A673 (cell line): ENCODE measurements at regions of chr1 and their contacts with region 1.

Region 1: GRCh38 chr1:84753516-84754385 is 63.5 kb upstream of the SSX2IP start:
- DNase-seq: peak; percentile 88
- H3K4me3 ChIP-seq: no peak overlapping the region
- H3K27ac ChIP-seq: no peak overlapping the region
- H3K4me1 ChIP-seq: peaks cover 4% of the 10 kb centered on the region
- H3K27me3 ChIP-seq: no peaks in the 10 kb centered on the region
- CTCF ChIP-seq: peak; percentile 98

Region 2: GRCh38 chr1:83931658-83932253 is 822.0 kb before region 1 on chr1:
- CTCF ChIA-PET with region 1: no interaction called
- POLR2A ChIA-PET with region 1: no interaction called
- intact Hi-C with region 1: loop called (anchors 10 kb)
- DNase-seq: peak; percentile 75
- H3K4me3 ChIP-seq: no peak overlapping the region
- H3K27ac ChIP-seq: no peak overlapping the region
- H3K4me1 ChIP-seq: peaks cover 18% of the 10 kb centered on the region
- H3K27me3 ChIP-seq: no peaks in the 10 kb centered on the region
- CTCF ChIP-seq: peak; percentile 79

Region 3: DNA sequence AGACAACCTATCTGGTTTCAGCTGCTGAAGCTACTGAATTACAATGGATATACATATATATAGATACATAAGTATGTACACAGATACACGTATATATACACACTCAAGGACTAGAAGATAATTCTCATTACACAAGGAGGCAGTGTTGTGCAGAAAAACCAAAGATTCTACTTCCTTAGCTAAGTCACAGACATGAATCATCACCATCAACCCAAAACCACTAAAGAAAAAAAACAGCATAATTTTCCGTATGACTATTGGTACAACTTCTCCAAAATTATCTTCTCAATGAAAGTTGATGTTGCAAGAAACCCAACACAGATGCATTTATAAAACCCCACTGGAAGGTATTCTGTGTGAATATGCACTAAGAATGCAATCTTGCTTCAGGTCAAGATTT is 311.5 kb before region 1 on chr1:
- CTCF ChIA-PET with region 1: interaction called, 9 read pairs
- POLR2A ChIA-PET with region 1: no interaction called
- intact Hi-C with region 1: loop called (anchors 1 kb)
- DNase-seq: peak; percentile 77
- H3K4me3 ChIP-seq: no peak overlapping the region
- H3K27ac ChIP-seq: no peak overlapping the region
- H3K4me1 ChIP-seq: no peaks in the 10 kb centered on the region
- H3K27me3 ChIP-seq: no peaks in the 10 kb centered on the region
- CTCF ChIP-seq: peak; percentile 63

Region 4: DNA sequence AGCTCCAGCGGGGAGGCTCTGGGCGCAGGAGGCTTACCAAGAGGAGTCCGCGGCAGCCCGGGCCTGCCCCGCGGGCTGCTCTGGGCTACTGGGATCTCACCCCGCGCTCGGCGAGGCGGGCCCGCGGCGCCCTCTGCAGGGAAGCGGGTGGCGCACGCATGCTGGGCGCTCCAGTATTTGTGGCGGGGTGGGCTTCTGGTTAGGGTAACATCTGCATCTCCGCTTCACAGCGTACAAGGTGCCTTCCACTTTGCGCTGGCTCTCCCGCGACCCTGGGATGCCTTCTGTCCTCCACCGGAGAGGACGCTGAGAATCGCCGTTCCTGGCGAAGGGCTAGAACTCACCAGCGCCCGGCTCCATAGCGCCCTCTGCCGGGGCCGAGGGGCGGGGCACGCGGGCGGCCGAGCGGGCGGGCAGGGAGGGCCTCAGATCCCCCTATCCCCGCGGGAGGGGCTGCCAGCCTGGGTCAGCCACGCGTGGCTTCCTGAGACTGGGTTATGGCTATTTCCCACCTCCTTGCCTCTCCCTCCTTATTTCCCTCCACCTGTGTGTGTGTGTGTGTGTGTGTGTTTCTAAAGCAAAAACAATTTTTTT is 132.9 kb before region 1 on chr1:
- CTCF ChIA-PET with region 1: no interaction called
- POLR2A ChIA-PET with region 1: no interaction called
- intact Hi-C with region 1: loop called (anchors 1 kb)
- DNase-seq: peak; percentile 89
- H3K4me3 ChIP-seq: peak overlapping the region; percentile 64
- H3K27ac ChIP-seq: peak overlapping the region; percentile 65
- H3K4me1 ChIP-seq: peaks cover 15% of the 10 kb centered on the region
- H3K27me3 ChIP-seq: no peaks in the 10 kb centered on the region
- CTCF ChIP-seq: peak; percentile 97

Region 5: GRCh38 chr1:84698151-84699110 is 55.3 kb before region 1 on chr1:
- CTCF ChIA-PET with region 1: no interaction called
- POLR2A ChIA-PET with region 1: no interaction called
- intact Hi-C with region 1: no loop called
- DNase-seq: peak; percentile 94
- H3K4me3 ChIP-seq: peak overlapping the region; percentile 14
- H3K27ac ChIP-seq: peak overlapping the region; percentile 96
- H3K4me1 ChIP-seq: peaks cover 60% of the 10 kb centered on the region
- H3K27me3 ChIP-seq: no peaks in the 10 kb centered on the region
- CTCF ChIP-seq: no peak